Calu3 (cell line): ENCODE measurements at regions of chr17 and their contacts with region 1.

Region 1: GRCh38 chr17:39980351-39981206 is at the start of gene PSMD3:
- DNase-seq: peak; percentile 100
- H3K4me3 Mint-ChIP-seq: peak within 1 kb of the TSS; percentile 77
- H3K27ac Mint-ChIP-seq: peak within 1 kb of the TSS; percentile 81
- H3K4me1 Mint-ChIP-seq: peaks cover 26% of the 10 kb centered on the region
- H3K27me3 Mint-ChIP-seq: peaks cover 43% of the 10 kb centered on the region
- CTCF ChIP-seq: no peak
- total RNA-seq, gene PSMD3: 2,152 and 2,179 TPM in 2 replicates

Region 2: DNA sequence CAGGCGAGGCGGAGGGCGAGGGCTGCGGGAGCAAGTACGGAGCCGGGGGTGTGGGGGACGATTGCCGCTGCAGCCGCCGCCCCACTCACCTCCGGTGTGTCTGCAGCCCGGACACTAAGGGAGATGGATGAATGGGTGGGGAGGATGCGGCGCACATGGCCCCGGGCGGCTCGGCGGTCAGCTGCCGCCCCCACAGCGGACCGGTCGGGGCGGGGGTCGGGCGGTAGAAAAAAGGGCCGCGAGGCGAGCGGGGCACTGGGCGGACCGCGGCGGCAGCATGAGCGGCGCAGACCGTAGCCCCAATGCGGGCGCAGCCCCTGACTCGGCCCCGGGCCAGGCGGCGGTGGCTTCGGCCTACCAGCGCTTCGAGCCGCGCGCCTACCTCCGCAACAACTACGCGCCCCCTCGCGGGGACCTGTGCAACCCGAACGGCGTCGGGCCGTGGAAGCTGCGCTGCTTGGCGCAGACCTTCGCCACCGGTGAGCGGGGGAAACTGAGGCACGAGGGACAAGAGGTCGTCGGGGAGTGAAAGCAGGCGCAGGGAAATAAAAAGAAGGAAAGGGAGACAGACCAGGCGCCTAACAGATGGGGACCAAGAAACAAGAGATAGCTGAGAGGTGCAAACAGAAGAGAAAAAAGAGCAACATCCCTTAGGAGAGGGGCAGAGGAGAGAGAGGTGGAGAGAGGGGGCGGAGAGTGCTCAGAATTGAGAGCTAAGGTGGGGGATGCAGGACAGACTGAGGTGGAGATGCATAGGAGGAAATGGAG is 312.2 kb before region 1 on chr17 and contains the start of gene PNMT:
- CTCF ChIA-PET with region 1: interaction called, 8,195 read pairs
- intact Hi-C with region 1: loop called (anchors 2 kb)
- DNase-seq: peak; percentile 100
- H3K4me3 Mint-ChIP-seq: peak within 1 kb of the TSS; percentile 24
- H3K27ac Mint-ChIP-seq: peak within 1 kb of the TSS; percentile 0
- H3K4me1 Mint-ChIP-seq: peaks cover 65% of the 10 kb centered on the region
- H3K27me3 Mint-ChIP-seq: peaks cover 69% of the 10 kb centered on the region
- CTCF ChIP-seq: no peak
- total RNA-seq, gene PNMT: 1.3 and 3.2 TPM in 2 replicates

Region 3: DNA sequence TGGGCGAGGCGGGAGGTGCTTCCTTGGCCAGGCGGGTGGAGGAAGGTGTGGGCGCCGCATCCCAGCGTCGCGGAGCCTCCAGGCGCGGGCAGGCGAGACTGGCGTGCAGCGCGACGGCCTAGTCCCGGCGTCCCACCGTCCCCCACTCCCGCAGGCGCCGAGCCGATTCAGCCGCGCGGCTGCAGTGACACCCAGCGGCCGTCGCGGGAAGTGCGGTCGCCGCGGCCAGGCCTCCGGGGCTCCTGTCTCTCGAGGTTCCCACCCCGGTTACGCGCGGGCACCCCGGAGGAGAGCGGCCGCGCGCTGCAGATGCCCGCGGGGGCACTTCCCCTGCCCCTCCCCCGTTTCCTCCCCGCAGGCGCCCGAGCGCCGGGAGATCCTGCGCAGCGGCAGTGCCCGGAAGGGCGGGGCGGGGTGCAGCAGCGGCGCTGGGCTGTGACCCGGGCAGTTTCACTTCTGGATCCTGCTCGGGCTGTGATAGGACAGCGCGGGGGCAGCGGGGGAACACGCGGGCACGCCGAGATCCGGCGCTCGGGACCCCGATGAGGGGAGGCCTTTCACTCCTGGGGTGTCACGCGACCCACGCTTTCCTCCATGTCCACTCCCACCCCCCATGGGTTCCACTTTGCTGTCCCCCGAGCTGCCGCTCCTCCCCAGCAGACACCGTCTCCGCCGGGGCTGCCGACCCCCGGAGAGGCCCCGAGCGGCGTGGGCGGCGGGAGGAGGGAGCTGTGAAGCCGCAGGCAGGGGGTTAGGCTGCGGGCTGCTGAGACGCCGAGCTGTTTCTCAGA is 226.2 kb before region 1 on chr17:
- CTCF ChIA-PET with region 1: interaction called, 153 read pairs
- intact Hi-C with region 1: loop called (anchors 1 kb)
- DNase-seq: peak; percentile 100
- H3K4me3 Mint-ChIP-seq: peak overlapping the region; percentile 63
- H3K27ac Mint-ChIP-seq: peak overlapping the region; percentile 12
- H3K4me1 Mint-ChIP-seq: peaks cover 58% of the 10 kb centered on the region
- H3K27me3 Mint-ChIP-seq: peaks cover 35% of the 10 kb centered on the region
- CTCF ChIP-seq: no peak

Region 4: DNA sequence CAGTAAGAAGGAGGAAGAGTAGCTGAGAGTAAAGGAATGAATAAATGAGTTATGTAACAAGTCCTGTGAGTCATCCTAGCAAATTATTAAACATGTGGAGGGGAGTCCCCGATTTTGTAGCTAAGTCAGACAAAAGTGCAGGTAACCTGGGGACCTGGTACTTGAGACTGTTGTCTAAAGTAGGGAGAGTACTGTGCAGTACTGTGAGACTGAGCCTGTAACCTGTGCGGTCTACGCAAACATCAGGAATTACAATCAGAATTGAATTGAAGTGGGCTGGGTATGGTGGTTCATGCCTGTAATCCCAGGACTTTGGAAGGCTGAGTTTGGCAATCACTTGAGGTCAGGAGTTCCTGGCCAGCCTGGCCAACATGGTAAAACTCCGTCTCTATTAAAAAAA is 152.1 kb before region 1 on chr17:
- CTCF ChIA-PET with region 1: interaction called, 1,809 read pairs
- intact Hi-C with region 1: loop called (anchors 1 kb)
- DNase-seq: peak; percentile 100
- H3K4me3 Mint-ChIP-seq: peak overlapping the region; percentile 36
- H3K27ac Mint-ChIP-seq: peak overlapping the region; percentile 48
- H3K4me1 Mint-ChIP-seq: peaks cover 17% of the 10 kb centered on the region
- H3K27me3 Mint-ChIP-seq: no peaks in the 10 kb centered on the region
- CTCF ChIP-seq: no peak

Region 5: GRCh38 chr17:39939588-39940419 is 40.8 kb before region 1 on chr17:
- CTCF ChIA-PET with region 1: interaction called, 6,506 read pairs
- intact Hi-C with region 1: loop called (anchors 1 kb)
- DNase-seq: peak; percentile 76
- H3K4me3 Mint-ChIP-seq: no peak overlapping the region
- H3K27ac Mint-ChIP-seq: no peak overlapping the region
- H3K4me1 Mint-ChIP-seq: peaks cover 12% of the 10 kb centered on the region
- H3K27me3 Mint-ChIP-seq: peaks cover 63% of the 10 kb centered on the region
- CTCF ChIP-seq: no peak

Region 6: DNA sequence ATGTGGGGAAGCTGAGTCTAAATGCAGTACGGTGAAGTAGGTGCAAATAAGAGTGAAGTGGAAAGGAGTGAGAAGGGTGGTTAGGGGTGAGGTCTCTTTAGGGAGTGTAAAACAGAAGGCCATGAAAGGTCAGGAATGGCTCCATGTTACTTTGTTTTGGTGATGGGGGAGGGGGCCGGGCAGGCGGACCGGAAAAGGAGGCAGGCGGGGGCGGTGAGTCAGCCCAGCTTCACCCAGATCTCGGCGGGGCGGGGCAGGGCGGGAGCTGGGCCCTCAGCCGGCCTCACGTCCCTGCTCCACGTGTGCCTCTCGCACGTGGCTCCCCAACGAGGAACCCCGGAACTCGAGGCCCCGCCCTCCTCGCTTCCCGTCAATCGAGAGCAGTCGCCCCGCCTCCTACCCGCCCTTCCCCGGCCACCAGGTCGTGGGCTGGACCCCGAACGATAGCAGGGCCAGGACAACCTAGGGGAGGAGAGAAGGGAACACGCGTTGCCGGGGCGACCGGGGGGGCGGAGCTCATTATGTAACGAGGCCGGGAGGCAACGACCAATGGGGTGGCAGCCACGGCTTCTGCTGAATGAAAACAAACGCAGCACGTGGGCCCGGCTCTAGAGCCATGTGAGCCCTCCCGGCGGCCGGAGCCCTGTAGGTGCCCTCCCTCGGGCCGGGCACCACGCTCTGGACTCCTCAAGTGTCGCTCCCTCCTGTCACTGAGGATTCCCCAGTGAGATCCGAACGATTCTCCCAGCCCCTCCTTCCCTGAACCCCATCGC is 118.5 kb after region 1 on chr17:
- CTCF ChIA-PET with region 1: interaction called, 58 read pairs
- intact Hi-C with region 1: loop called (anchors 1 kb)
- DNase-seq: peak; percentile 100
- H3K4me3 Mint-ChIP-seq: peak overlapping the region; percentile 80
- H3K27ac Mint-ChIP-seq: peak overlapping the region; percentile 85
- H3K4me1 Mint-ChIP-seq: peaks cover 73% of the 10 kb centered on the region
- H3K27me3 Mint-ChIP-seq: no peaks in the 10 kb centered on the region
- CTCF ChIP-seq: no peak

Region 7: GRCh38 chr17:40450175-40450574 is 469.6 kb after region 1 on chr17:
- CTCF ChIA-PET with region 1: interaction called, 24 read pairs
- intact Hi-C with region 1: no loop called
- DNase-seq: peak; percentile 100
- H3K4me3 Mint-ChIP-seq: no peak overlapping the region
- H3K27ac Mint-ChIP-seq: no peak overlapping the region
- H3K4me1 Mint-ChIP-seq: peaks cover 48% of the 10 kb centered on the region
- H3K27me3 Mint-ChIP-seq: peaks cover 17% of the 10 kb centered on the region
- CTCF ChIP-seq: no peak

Region 8: GRCh38 chr17:41211845-41212466 is 1231.4 kb after region 1 on chr17:
- CTCF ChIA-PET with region 1: no interaction called
- intact Hi-C with region 1: no loop called
- DNase-seq: no peak
- H3K4me3 Mint-ChIP-seq: no peak overlapping the region
- H3K27ac Mint-ChIP-seq: no peak overlapping the region
- H3K4me1 Mint-ChIP-seq: peaks cover 15% of the 10 kb centered on the region
- H3K27me3 Mint-ChIP-seq: no peaks in the 10 kb centered on the region
- CTCF ChIP-seq: no peak